ENCODE measurements at regions of chr16 and their contacts with region 1.

Region 1: DNA sequence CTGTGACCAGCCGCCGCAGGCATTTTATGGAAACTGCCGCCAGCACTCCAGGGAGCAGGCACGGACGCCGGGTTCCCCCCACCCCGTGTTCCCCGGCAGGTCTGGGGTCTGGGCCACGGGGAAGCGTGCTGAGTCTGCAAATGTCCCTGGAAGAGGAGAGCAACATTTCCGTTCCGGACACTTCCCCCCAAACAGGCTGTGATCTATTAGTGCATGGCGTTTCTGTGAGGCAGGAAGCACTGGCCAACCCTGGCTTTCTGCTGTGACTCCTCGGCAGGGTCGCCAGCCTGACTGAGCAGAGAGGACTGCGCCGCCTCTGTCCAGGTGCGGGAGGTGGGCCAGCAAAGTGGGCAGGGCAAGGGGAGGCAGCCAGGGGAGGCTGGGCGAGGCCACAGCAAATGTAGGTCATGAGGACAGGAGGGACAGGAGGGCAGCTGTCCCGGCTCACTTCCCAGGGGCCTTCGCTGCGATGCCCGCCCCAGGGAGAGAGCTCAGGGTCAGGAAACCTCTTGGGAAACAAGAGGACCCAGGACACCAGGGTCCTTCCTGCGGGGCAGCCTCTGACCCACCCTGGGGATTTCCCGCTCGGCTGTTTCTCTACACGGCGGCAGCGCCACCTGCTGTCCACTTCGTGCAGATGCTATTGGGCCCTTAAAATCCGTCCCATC is 9.5 kb downstream of the FOXF1 start:
- DNase-seq: peak; percentile 75
- H3K27ac ChIP-seq: no peak overlapping the region
- CTCF ChIP-seq: peak; percentile 93

Region 2: DNA sequence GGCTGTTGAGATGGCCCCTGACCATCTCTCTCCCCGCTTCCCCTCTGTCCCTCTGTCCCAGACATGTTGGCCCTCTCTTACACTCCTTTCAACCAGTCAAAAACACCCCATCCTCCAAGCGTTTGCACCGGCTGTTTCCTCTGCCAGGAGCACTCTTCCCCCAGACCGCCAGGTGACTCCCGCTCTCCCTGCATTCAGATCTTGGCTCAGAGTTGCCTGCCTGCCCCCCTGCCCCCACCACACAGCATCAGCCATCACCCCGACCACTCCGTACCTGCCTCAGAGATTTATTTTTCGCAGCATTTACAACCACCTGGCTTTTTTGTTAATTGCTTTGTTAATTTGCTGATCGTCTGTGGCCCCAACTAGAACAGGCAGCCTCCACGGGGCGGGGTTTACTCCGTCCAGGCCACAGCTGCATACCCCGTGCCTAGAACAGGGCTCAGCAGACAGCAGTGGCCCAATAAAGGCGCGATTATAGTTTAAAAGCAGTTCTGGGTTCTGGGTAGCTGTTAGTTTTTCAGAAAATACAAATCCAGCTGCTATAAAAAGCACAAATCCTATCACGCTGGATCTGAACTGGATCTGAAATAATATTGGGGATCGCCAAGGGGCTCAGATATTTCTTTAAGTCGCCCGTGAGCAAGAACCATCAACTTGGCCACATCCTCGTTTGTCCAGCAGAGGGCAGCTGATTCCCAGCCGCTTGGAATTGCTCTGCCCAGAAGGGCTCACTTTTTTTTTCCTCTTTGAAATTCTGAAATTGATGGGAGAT is 447.3 kb before region 1 on chr16:
- CTCF ChIA-PET with region 1: interaction called, 23 read pairs
- POLR2A ChIA-PET with region 1: no interaction called
- DNase-seq: peak; percentile 64
- H3K27ac ChIP-seq: no peak overlapping the region
- CTCF ChIP-seq: peak; percentile 87

Region 3: DNA sequence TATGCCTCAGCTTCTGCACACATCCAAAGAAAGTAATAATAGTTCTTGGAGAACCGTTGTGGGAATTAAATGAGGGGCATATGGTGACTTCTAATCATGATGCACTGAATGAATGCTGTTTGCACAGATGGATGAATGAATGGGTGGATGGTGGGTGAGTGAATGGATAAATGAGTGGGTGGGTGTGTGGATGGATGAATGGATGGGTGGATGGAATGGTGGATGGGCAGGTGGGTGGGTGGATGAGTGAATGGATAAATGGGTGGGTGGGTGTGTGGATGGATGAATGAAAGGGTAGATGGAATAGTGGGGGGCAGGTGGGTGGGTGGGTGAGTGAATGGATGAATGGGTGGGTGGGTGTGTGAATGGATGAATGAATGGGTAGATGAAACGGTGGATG is 54.3 kb before region 1 on chr16:
- CTCF ChIA-PET with region 1: no interaction called
- POLR2A ChIA-PET with region 1: no interaction called
- DNase-seq: no peak
- H3K27ac ChIP-seq: no peak overlapping the region
- CTCF ChIP-seq: no peak

Region 4: GRCh38 chr16:87447323-87447722 is 927.5 kb after region 1 on chr16:
- CTCF ChIA-PET with region 1: no interaction called
- POLR2A ChIA-PET with region 1: no interaction called
- DNase-seq: no peak
- H3K27ac ChIP-seq: no peak overlapping the region
- CTCF ChIP-seq: no peak